ENCODE measurements at regions of chr6 and their contacts with region 1.

Region 1: DNA sequence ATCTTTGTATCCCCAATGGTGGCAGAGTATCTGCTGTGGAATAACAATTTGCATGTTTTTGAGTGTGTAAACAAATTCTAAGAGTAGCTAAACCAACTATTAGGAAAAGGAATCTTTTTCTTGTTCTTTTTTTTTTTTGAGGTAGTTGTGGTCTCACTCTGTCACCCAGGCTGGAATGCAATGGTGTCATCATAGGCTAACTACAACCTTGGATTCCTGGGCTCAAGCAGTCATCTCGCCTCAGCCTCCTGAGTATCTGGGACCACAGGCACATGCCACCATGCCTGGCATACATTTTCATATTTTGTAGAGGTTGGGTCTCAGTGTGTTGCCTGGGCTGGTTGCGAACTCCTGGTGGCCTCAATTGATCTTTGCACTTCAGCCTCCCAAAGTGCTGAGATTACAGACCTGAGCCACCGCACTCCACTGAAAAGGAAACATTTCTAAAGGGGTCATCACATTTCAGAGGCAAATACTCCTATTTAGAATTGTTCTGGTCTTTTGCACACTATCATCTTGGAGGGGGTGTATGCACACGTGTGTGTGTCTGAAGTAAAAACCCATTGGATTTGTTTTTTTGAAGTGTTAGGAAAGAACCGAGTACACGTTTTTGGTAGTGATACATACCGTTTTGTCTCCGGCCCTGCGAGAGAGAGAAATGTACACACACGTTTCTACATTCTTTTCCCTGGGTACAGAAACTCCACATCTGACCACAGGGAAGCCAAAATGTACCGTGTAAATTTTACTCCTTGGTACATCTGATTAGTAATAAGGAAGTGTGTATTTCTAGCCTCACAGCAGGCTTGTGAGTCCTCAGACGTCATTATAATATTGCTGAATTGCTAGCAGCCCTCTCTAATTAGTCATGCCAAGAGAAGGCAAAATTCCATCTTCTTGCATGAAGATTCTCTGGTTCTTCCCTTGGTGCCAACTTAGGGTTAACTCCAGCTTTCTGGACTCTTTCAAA is 183.6 kb downstream of the JARID2 start:
- DNase-seq: no peak
- ATAC-seq: peak; percentile 24
- H3K4me3 ChIP-seq: peak overlapping the region; percentile 3; the same call in 1 of the 2 replicates
- H3K27ac ChIP-seq: peak overlapping the region; percentile 51
- H3K4me1 ChIP-seq: peaks cover 49% of the 10 kb centered on the region
- H3K27me3 ChIP-seq: no peaks in the 10 kb centered on the region
- CTCF ChIP-seq: no peak
- EP300 ChIP-seq: no peak
- POLR2A ChIP-seq: no peak
- RAD21 ChIP-seq: no peak

Region 2: GRCh38 chr6:15358579-15359327 is 70.7 kb before region 1 on chr6:
- CTCF ChIA-PET with region 1: interaction called, 3 read pairs
- POLR2A ChIA-PET with region 1: no interaction called
- RAD21 ChIA-PET with region 1: interaction called, 13 read pairs
- SMC1A ChIA-PET with region 1: interaction called, 3 read pairs
- in situ Hi-C with region 1: no loop called
- intact Hi-C with region 1: no loop called
- DNase-seq: peak; percentile 75
- ATAC-seq: peak; percentile 80
- H3K4me3 ChIP-seq: peak overlapping the region; percentile 27
- H3K27ac ChIP-seq: peak overlapping the region; percentile 81
- H3K4me1 ChIP-seq: peaks cover 75% of the 10 kb centered on the region
- H3K27me3 ChIP-seq: no peaks in the 10 kb centered on the region
- CTCF ChIP-seq: no peak
- EP300 ChIP-seq: no peak; a peak in 1 of 4 replicates
- POLR2A ChIP-seq: no peak
- RAD21 ChIP-seq: no peak

Region 3: DNA sequence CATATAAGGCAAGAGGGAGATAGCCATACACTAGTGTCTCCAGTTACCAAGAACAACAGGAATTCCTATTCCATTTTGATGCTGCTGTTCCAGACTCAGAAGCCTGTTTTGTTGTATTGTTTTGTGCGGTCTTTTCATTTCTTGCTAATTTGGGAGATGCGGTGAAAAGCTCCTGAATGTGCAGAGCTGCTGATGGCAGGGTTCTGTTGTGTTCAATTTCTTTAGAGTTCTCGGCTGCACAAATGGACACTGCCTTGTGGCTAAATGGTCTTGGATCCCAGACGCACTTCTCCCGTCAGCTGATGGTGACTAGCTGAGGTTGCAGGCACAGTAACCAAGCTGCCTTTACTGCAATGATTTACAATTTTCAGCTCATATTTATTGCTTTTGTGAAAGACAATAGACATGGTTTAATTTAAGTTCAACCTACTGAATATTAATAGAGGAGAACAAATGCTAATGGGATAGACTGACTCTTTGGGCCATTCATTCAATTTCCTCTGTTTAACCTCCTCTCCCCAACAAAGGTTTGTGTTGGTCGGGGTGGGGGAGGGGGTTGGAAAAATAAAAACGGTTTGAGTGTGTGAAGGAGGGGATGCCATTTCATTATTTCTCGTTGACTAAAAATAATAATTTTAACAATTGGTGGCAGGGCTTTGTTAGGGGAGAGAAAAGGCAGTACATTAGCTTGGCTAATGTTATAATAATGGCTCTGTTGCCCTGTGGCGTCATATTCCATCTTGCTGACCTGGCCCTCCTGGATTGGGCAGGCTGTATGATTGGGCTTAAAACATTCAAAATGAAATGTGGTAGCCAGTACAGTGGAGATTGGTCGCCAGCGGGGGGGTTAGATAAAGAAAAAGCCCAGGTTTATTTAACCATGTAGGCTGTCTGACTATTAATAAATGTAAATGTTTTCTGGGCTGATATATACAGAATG is 24.0 kb before region 1 on chr6:
- CTCF ChIA-PET with region 1: interaction called, 9 read pairs
- POLR2A ChIA-PET with region 1: interaction called, 4 read pairs
- RAD21 ChIA-PET with region 1: interaction called, 5 read pairs
- SMC1A ChIA-PET with region 1: interaction called, 143 read pairs
- in situ Hi-C with region 1: no loop called
- intact Hi-C with region 1: no loop called
- DNase-seq: no peak
- ATAC-seq: no peak
- H3K4me3 ChIP-seq: no peak overlapping the region
- H3K27ac ChIP-seq: no peak overlapping the region
- H3K4me1 ChIP-seq: peaks cover 28% of the 10 kb centered on the region
- H3K27me3 ChIP-seq: no peaks in the 10 kb centered on the region
- CTCF ChIP-seq: no peak
- EP300 ChIP-seq: no peak
- POLR2A ChIP-seq: no peak
- RAD21 ChIP-seq: no peak

Region 4: DNA sequence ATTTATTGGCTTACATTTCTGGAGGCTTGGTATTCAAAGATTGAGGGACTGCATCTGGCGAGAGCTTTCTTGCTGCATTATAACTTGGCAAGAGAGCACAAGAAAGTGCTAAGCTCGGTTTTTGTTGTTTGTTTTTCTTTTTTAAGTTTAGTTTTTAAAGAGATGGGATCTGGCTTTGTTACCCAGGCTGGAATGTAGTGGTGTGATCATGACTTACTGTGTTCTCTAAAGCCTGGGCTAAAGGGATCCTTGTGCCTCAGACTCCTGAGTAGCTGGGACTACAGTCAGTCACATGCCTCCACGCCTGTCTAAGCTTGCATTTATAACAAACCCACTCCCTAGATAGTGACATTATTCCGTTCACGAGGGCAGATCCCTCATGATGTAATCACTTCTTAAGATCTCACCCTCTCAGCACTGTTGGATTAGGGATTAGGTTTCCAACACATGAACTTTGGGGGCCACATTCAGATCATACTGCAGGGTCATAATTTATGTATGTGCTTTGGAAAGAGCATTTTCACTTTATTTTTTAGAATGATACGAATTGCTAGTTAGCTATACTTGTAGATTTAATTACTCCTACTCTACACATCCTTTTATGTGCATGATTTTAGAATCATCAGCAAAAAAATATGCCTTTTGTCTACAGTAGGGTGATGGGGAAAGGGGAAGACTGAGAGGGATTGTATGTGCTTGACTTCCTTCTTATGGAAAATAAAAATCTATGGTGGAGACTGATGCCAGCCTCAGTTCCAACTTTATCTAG is 15.8 kb before region 1 on chr6:
- CTCF ChIA-PET with region 1: interaction called, 9 read pairs
- POLR2A ChIA-PET with region 1: interaction called, 4 read pairs
- RAD21 ChIA-PET with region 1: interaction called, 4 read pairs
- SMC1A ChIA-PET with region 1: interaction called, 143 read pairs
- in situ Hi-C with region 1: no loop called
- intact Hi-C with region 1: no loop called
- DNase-seq: no peak
- ATAC-seq: no peak
- H3K4me3 ChIP-seq: no peak overlapping the region
- H3K27ac ChIP-seq: no peak overlapping the region
- H3K4me1 ChIP-seq: peaks cover 24% of the 10 kb centered on the region
- H3K27me3 ChIP-seq: no peaks in the 10 kb centered on the region
- CTCF ChIP-seq: no peak
- EP300 ChIP-seq: no peak
- POLR2A ChIP-seq: no peak
- RAD21 ChIP-seq: no peak

Region 5: GRCh38 chr6:15441215-15441868 is 11.9 kb after region 1 on chr6:
- CTCF ChIA-PET with region 1: interaction called, 39 read pairs
- POLR2A ChIA-PET with region 1: interaction called, 4 read pairs
- RAD21 ChIA-PET with region 1: interaction called, 5 read pairs
- SMC1A ChIA-PET with region 1: interaction called, 11 read pairs
- in situ Hi-C with region 1: no loop called
- intact Hi-C with region 1: no loop called
- DNase-seq: no peak
- ATAC-seq: peak; percentile 74
- H3K4me3 ChIP-seq: no peak overlapping the region
- H3K27ac ChIP-seq: no peak overlapping the region
- H3K4me1 ChIP-seq: peaks cover 29% of the 10 kb centered on the region
- H3K27me3 ChIP-seq: no peaks in the 10 kb centered on the region
- CTCF ChIP-seq: peak; percentile 79 to 83 (median 79)
- EP300 ChIP-seq: no peak
- POLR2A ChIP-seq: no peak
- RAD21 ChIP-seq: peak; percentile 87

Measured in GM12878 (cell line).